Head of caudate nucleus (tissue), 42 donors: ENCODE measurements at regions of chr17 and their contacts with region 1.

Region 1: DNA sequence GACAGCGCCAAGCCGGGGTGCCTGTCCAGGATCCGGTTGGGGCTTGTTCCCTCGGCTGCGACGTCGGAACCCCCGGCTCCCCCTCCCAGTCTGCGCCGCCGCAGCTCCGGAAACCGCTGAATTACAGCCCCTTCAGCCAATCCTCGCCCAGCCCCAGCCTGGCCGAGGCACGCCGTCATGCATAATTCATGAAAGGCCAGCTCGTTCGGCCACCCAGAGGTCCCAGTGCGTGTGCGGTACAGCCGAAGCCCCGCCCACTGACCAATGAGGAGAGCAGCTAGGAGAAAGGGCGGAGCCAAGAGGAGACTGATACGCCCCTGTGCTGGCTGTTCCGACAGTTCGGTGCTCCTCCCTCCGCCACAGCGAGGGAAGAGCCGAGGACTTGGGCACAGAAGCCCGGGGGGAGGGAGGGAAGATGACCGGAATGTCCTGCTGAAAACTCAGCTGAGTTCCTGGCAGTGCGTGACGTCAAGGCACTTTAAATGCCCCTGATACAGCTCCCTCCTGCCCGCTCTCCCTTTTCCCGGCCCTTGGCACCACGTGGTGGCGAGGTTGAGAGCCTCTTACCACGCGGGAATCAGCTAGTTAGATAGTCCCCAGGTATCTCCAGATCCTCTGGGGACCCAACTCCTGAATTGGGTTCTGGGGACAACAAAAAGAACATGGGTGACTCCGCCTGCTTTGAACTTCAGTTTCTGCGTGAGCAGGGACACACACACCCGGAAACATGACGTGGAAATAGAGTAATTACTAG is at the start of gene STAT3:
- DNase-seq: peak; percentile 99 to 100 (median 100)

Region 2: DNA sequence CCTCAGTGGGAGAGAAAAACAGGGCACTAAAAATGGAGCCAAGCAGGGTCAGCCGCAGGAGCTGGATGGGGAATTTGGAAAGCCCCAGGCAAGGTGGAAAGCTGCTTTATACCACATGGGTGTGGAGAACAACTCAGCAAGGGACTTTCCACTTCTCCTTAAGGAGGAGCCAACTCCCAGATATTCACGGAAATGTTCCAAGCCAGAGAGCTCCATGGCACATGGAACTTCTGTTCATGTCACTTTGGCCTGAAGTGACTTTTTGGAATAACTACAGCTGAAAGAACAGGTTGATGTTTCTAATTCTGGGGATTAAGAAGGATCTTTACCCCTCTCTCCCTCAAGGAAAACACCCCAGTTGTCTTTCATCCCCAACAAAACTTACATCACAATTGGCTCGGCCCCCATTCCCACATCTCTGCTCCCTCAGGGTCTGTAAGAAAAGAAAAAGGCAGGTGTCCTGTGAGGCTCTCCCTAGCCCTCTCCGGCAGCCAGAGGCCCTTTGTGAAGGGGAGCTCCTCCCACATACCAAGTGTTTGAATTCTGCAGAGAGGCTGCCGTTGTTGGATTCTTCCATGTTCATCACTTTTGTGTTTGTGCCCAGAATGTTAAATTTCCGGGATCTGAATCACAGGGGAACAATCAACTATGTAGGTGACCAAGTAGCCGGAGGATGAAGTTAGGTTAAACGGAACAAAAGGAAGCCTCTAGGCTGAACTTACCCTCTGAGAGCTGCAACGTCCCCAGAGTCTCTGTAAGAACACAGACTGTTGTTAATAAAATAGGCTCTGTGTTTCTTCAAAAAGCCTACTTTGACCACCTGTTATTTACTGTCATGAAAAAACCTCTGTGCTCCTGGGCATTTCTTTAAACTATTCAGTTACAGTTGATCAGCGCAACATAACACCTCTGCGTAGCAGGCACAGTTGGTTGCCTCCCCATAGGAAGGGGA is 59.3 kb before region 1 on chr17:
- intact Hi-C with region 1: loop called (anchors 5 kb)
- DNase-seq: peak in 3 of 42 donors; percentile 22 to 52 (median 47)

Region 3: GRCh38 chr17:42459256-42459800 is 70.8 kb after region 1 on chr17:
- intact Hi-C with region 1: loop called (anchors 2 kb)
- DNase-seq: peak; percentile 63 to 91 (median 78)

Region 4: GRCh38 chr17:42517516-42517915 is 129.0 kb after region 1 on chr17:
- intact Hi-C with region 1: no loop called
- DNase-seq: peak; percentile 55 to 92 (median 83)